Activated CD4-positive, alpha-beta T cell treated with anti-CD3 and anti-CD28 coated beads for 36 hours (primary cell): ENCODE measurements at regions of chr2 and their contacts with region 1.

Region 1: GRCh38 chr2:169012812-169013627 is 18.1 kb downstream of the ABCB11 start:
- DNase-seq: no peak
- ATAC-seq: peak; percentile 28
- H3K4me3 Mint-ChIP-seq: no peak overlapping the region
- H3K27ac Mint-ChIP-seq: peak overlapping the region; percentile 51
- H3K4me1 Mint-ChIP-seq: peaks cover 11% of the 10 kb centered on the region
- H3K27me3 Mint-ChIP-seq: peaks cover 2% of the 10 kb centered on the region

Region 2: DNA sequence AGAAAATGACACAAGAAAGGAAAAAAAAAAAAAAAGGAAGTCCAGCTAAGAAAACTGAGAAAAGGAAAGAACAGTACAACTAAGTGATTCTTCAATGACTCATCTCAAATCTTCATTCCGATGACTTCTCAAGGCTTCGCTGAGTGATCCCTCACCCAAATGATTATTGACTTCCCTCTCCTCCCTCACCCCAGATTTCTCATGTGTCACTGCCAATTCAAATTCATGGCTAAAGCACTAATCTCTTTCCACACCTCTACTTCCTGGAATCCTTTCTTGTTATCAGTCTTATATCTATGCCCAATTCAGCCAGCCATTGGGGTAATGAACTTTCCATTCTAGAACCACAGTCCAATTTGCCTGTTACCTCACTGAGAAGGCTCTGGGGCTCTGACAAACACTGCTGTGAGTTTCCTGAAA is 25.3 kb after region 1 on chr2:
- CTCF ChIA-PET with region 1: no interaction called
- POLR2A ChIA-PET with region 1: no interaction called
- intact Hi-C with region 1: loop called in 1 of 2 experiments (anchors 2 kb)
- DNase-seq: no peak
- ATAC-seq: peak; percentile 88
- H3K4me3 Mint-ChIP-seq: no peak overlapping the region
- H3K27ac Mint-ChIP-seq: no peak overlapping the region
- H3K4me1 Mint-ChIP-seq: peaks cover 4% of the 10 kb centered on the region
- H3K27me3 Mint-ChIP-seq: no peaks in the 10 kb centered on the region

Region 3: DNA sequence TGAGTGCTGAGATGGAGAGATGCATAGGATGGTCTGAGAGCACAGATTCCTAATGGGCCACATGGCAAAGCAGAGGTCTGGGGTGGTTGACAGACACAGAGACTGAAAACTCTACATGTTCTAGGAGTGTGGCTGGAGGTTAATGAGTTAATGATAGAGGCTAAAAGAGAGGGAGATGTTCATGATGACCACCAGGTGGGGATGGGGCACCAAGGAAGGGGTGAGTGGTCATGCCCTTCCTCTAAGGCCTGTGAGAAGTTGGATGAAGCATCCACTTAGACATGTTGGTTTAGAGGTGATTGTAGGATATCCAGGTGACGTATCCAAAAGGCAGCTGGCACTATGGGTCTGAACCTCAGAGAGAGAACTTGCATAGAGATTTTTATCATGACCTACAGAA is 247.2 kb after region 1 on chr2:
- CTCF ChIA-PET with region 1: no interaction called
- POLR2A ChIA-PET with region 1: no interaction called
- intact Hi-C with region 1: no loop called
- DNase-seq: no peak
- ATAC-seq: no peak
- H3K4me3 Mint-ChIP-seq: no peak overlapping the region
- H3K27ac Mint-ChIP-seq: no peak overlapping the region
- H3K4me1 Mint-ChIP-seq: no peaks in the 10 kb centered on the region
- H3K27me3 Mint-ChIP-seq: peaks cover 14% of the 10 kb centered on the region

Region 4: GRCh38 chr2:169815849-169816248 is 802.8 kb after region 1 on chr2:
- CTCF ChIA-PET with region 1: no interaction called
- POLR2A ChIA-PET with region 1: no interaction called
- intact Hi-C with region 1: no loop called
- DNase-seq: no peak
- ATAC-seq: peak; percentile 74
- H3K4me3 Mint-ChIP-seq: no peak overlapping the region
- H3K27ac Mint-ChIP-seq: no peak overlapping the region
- H3K4me1 Mint-ChIP-seq: peaks cover 18% of the 10 kb centered on the region
- H3K27me3 Mint-ChIP-seq: no peaks in the 10 kb centered on the region